PC-3 (cell line): ENCODE measurements at regions of chr6 and their contacts with region 1.

Region 1: DNA sequence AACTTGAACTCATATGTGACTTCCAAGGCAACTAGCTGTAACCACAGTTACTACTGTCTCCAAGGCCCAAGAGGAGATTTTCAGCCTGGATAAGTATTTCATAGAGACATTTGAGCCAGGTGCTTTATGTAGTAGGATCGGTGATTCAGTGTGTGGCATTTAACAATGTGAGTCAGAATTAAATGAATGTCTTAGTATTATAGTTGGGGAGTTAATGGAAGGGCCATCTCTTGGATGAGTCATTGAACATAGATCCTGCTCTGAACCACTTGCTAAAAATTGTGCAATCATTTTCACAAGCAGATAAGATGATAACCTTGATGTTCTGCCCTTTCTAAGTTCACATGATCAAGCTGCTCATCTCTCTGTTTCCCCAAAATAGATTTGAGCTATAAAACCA is 668.9 kb upstream of the CITED2 start:
- DNase-seq: peak; percentile 92
- ATAC-seq: peak; percentile 83
- H3K4me3 ChIP-seq: no peak overlapping the region
- H3K27ac ChIP-seq: peak overlapping the region; percentile 78
- H3K4me1 ChIP-seq: peaks cover 56% of the 10 kb centered on the region
- H3K27me3 ChIP-seq: no peaks in the 10 kb centered on the region
- CTCF ChIP-seq: no peak

Region 2: GRCh38 chr6:139568956-139569548 is 474.3 kb before region 1 on chr6:
- CTCF ChIA-PET with region 1: no interaction called
- POLR2A ChIA-PET with region 1: no interaction called
- intact Hi-C with region 1: no loop called
- DNase-seq: peak; percentile 67
- ATAC-seq: peak; percentile 87
- H3K4me3 ChIP-seq: no peak overlapping the region
- H3K27ac ChIP-seq: peak overlapping the region; percentile 63
- H3K4me1 ChIP-seq: peaks cover 26% of the 10 kb centered on the region
- H3K27me3 ChIP-seq: no peaks in the 10 kb centered on the region
- CTCF ChIP-seq: no peak

Region 3: DNA sequence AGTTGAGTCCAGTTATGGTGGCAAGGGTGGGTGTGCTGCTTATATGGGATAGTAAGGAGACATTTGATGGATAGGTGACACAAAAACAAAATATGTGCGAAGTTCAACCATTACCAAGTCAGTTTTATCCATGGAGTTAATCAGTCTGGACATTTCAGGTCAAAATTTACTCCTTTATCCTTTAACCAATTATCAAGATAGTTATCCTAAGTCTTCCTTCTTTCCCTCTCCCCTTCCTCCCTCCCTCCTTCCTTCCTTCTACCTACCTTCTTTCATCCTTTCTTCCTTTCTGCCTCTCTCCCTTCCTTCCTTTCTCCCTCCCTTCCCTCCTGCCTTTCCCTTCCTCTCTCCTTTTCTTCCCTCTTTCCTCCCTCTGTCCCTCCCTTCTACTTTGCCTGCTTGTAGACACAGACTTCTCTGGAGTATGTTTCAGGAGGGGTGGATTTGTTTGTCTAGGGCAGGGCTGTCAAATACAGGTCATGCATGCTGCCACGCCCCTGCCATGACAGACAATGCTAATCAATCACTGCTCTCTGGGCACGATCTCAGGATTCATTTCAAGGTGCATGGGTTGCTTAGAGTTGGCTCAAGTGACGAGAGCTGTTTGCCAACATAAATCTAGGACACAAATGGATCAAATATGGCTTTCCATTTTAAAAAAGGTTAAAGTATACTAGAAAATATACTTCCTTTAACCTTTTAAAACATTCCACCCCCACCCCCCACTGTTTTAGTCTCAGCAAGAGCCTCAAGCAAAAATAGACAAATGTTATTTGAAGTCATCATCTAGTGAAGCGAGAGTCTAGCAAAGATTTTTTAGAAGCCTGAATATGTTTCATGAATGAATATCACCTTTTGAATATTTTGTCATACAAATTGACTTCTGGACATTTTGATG is 387.3 kb before region 1 on chr6:
- CTCF ChIA-PET with region 1: no interaction called
- POLR2A ChIA-PET with region 1: no interaction called
- intact Hi-C with region 1: loop called (anchors 5 kb)
- DNase-seq: peak; percentile 77
- ATAC-seq: peak; percentile 99
- H3K4me3 ChIP-seq: no peak overlapping the region; the same call in 1 of the 2 replicates
- H3K27ac ChIP-seq: peak overlapping the region; percentile 59
- H3K4me1 ChIP-seq: peaks cover 16% of the 10 kb centered on the region
- H3K27me3 ChIP-seq: no peaks in the 10 kb centered on the region
- CTCF ChIP-seq: no peak

Region 4: GRCh38 chr6:139871803-139872510 is 171.4 kb before region 1 on chr6:
- CTCF ChIA-PET with region 1: no interaction called
- POLR2A ChIA-PET with region 1: interaction called, 18 read pairs
- intact Hi-C with region 1: no loop called
- DNase-seq: no peak
- ATAC-seq: no peak
- H3K4me3 ChIP-seq: no peak overlapping the region
- H3K27ac ChIP-seq: no peak overlapping the region
- H3K4me1 ChIP-seq: no peaks in the 10 kb centered on the region
- H3K27me3 ChIP-seq: no peaks in the 10 kb centered on the region
- CTCF ChIP-seq: no peak

Region 5: DNA sequence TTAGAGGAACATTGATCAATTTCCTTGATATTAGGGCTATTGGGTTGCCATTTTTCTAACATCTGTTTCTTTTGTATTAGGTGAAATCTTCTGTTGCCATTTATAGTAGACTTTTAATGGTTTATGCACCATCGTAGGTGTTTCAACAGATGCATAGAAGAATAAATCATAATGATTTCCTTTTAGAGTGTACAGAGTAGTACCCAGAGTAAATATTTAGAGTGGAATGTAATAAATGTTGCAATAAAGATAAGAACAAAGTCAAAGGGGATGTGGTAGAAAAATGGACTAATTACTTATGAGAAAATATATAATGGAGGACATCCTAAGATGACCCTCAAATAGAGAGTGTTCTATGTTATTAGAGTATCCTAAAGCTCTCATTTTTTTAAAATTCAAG is 25.9 kb before region 1 on chr6:
- CTCF ChIA-PET with region 1: no interaction called
- POLR2A ChIA-PET with region 1: no interaction called
- intact Hi-C with region 1: loop called (anchors 1 kb)
- DNase-seq: no peak
- ATAC-seq: peak; percentile 68
- H3K4me3 ChIP-seq: no peak overlapping the region
- H3K27ac ChIP-seq: no peak overlapping the region
- H3K4me1 ChIP-seq: no peaks in the 10 kb centered on the region
- H3K27me3 ChIP-seq: no peaks in the 10 kb centered on the region
- CTCF ChIP-seq: no peak

Region 6: DNA sequence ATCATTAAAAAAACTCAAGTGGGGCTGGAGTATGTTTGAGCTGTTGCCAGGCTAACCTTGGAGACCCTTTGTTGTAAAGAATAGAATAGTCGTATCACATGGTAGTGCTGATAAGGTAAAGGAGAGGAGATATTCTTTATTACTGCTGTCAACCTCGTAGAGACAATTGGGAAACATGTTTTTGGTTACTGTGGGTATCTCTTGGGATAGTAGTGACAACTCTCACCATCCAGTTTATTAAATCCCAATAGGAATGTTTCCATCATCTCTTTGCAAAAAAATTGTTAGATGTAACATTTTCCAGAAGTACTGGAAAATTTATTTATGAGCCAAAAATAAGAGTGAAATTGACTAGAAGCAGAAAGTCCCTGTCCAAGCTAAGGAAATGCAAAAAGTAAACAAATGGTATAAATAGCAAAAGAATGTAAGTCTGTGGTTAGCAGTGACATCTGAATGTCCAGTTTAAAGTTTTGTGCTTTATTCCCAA is 160.4 kb after region 1 on chr6:
- CTCF ChIA-PET with region 1: no interaction called
- POLR2A ChIA-PET with region 1: interaction called, 3 read pairs
- intact Hi-C with region 1: loop called (anchors 5 kb)
- DNase-seq: peak; percentile 41
- ATAC-seq: peak; percentile 69
- H3K4me3 ChIP-seq: no peak overlapping the region
- H3K27ac ChIP-seq: 0 out of 2 replicates have a peak overlapping the region, but pooled peaks have one; percentile 18
- H3K4me1 ChIP-seq: peaks cover 21% of the 10 kb centered on the region
- H3K27me3 ChIP-seq: no peaks in the 10 kb centered on the region
- CTCF ChIP-seq: no peak